Caco-2 (cell line): ENCODE measurements at regions of chr6 and their contacts with region 1.

Region 1: DNA sequence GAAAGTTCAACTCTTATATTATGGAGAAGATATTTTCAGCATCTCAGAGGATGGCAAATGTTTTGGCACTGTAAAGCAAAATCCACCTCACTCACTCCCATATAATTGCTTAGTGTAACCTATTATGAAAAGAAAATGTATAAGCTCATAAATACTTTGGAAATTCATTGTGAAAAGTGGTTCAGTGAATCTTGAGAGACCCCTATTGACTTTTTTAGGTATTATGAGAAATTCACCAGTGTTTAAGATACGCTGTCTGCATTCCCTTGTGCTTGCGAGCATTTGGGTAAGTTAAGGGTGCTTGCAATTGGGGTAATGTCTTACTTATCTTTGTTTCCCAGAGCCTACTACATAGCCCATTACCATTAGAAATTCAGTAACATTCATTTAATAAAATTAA is 66.3 kb upstream of the BMP5 start:
- DNase-seq: no peak
- H3K4me3 ChIP-seq: no peak overlapping the region
- H3K4me3 Mint-ChIP-seq: no peak overlapping the region
- H3K27ac Mint-ChIP-seq: no peak overlapping the region
- H3K4me1 ChIP-seq: no peaks in the 10 kb centered on the region
- H3K4me1 Mint-ChIP-seq: no peaks in the 10 kb centered on the region
- H3K27me3 ChIP-seq: no peaks in the 10 kb centered on the region; the same call in 1 of the 2 replicates
- H3K27me3 Mint-ChIP-seq: no peaks in the 10 kb centered on the region
- CTCF ChIP-seq: no peak

Region 2: DNA sequence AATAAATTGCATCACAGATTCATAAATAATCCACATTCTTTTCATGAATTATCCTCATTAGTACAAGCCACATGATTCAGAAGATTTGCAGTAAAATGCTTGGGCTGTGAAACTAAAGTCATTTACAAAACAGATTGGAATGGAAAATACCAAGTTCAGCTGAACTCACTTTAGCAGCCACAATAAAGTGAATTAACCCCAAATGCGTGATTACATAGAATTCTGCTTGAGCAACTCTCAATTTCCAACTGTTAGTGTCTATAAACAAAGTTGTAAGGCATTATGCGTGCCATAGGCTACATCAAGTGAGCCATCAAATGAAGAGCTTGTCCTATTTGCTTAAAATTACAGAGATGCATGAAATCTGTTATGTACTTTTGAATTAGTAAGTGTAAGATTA is 674.8 kb before region 1 on chr6:
- CTCF ChIA-PET with region 1: no interaction called
- POLR2A ChIA-PET with region 1: no interaction called
- intact Hi-C with region 1: loop called (anchors 5 kb)
- DNase-seq: no peak
- H3K4me3 ChIP-seq: no peak overlapping the region
- H3K4me3 Mint-ChIP-seq: no peak overlapping the region
- H3K27ac Mint-ChIP-seq: no peak overlapping the region
- H3K4me1 ChIP-seq: no peaks in the 10 kb centered on the region
- H3K4me1 Mint-ChIP-seq: peaks cover 7% of the 10 kb centered on the region
- H3K27me3 ChIP-seq: no peaks in the 10 kb centered on the region
- H3K27me3 Mint-ChIP-seq: no peaks in the 10 kb centered on the region
- CTCF ChIP-seq: no peak